ENCODE measurements at regions of chr1 and their contacts with region 1.

Region 1: GRCh38 chr1:178310685-178311105 is 186.1 kb downstream of the CLEC20A start:
- DNase-seq: no peak
- ATAC-seq: peak; percentile 78 to 86 (median 82)
- H3K4me3 ChIP-seq: no peak overlapping the region
- H3K27ac ChIP-seq: peak overlapping the region in 1 of 12 donors; percentile 45
- H3K4me1 ChIP-seq: peaks cover 0 to 25% (median 8%) of the 10 kb centered on the region in 12 donors
- H3K27me3 ChIP-seq: no peaks in the 10 kb centered on the region
- CTCF ChIP-seq: peak; percentile 61 to 84 (median 78)
- POLR2A ChIP-seq: no peak

Region 2: DNA sequence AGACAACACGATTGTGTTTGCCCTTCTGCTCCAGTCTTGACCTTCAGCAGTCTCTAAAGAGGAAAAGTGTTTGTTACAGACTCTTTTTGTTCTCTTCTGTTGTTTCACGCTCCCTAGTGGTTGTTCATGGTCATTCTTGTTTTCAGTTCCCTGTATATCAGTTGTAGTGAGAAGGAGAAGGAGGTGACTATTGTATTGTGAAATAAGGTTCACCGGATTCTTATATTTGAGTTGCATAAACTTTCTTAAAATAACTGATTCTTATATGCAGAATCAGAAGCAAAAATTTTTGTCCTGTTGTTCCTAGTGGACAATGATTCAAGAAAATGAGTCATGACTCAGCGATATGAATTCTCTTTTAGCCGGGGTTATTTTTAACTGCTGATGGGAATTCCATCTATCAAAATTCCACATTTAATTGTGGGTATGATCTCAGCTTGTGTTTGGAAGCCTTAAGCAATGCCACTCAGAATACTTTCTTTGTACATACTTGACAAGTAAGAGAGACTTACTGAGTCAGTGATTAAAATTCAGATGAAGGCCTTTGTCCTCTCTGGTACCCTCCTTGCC is 33.9 kb after region 1 on chr1:
- intact Hi-C with region 1: loop called in 4 of 10 experiments (anchors 2 to 5 kb)
- DNase-seq: no peak
- ATAC-seq: peak; percentile 63 to 83 (median 82)
- H3K4me3 ChIP-seq: peak overlapping the region in 6 of 12 donors; percentile 3 to 12 (median 5)
- H3K27ac ChIP-seq: peak overlapping the region; percentile 69 to 93 (median 83)
- H3K4me1 ChIP-seq: peaks cover 0 to 60% (median 28%) of the 10 kb centered on the region in 12 donors
- H3K27me3 ChIP-seq: no peaks in the 10 kb centered on the region
- CTCF ChIP-seq: peak; percentile 28 to 71 (median 50)
- POLR2A ChIP-seq: no peak

Region 3: DNA sequence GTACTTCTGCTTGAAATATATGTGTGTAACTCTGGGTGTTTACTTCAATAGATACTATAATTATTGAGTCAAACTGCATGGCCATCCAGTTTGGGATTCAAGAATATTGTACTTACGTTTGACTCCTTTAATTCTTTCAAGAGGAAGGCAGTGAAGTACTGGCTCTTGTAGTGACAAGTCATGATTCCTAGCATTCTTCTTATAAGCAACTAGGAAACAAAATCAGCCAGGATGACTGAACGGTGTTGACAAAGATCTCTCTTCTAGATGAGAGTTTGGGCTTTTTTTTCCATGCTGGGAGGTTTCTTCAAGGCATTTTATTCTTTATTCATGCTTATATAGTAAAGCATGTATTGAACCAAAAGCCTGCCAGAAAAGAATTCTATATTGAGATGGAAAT is 127.7 kb after region 1 on chr1:
- intact Hi-C with region 1: no loop called
- DNase-seq: no peak
- ATAC-seq: no peak
- H3K4me3 ChIP-seq: no peak overlapping the region
- H3K27ac ChIP-seq: no peak overlapping the region
- H3K4me1 ChIP-seq: peaks cover 0 to 9% (median 2%) of the 10 kb centered on the region in 12 donors
- H3K27me3 ChIP-seq: no peaks in the 10 kb centered on the region
- CTCF ChIP-seq: no peak
- POLR2A ChIP-seq: no peak

Region 4: GRCh38 chr1:178501705-178502329 is 191.1 kb after region 1 on chr1:
- intact Hi-C with region 1: loop called (anchors 2 to 10 kb)
- DNase-seq: peak; percentile 66 to 84 (median 72)
- ATAC-seq: peak in 3 of 4 donors; percentile 77 to 84 (median 82)
- H3K4me3 ChIP-seq: no peak overlapping the region
- H3K27ac ChIP-seq: no peak overlapping the region
- H3K4me1 ChIP-seq: peaks cover 0 to 7% (median 0%) of the 10 kb centered on the region in 12 donors
- H3K27me3 ChIP-seq: no peaks in the 10 kb centered on the region
- CTCF ChIP-seq: peak; percentile 84 to 96 (median 90)
- POLR2A ChIP-seq: no peak

Region 5: DNA sequence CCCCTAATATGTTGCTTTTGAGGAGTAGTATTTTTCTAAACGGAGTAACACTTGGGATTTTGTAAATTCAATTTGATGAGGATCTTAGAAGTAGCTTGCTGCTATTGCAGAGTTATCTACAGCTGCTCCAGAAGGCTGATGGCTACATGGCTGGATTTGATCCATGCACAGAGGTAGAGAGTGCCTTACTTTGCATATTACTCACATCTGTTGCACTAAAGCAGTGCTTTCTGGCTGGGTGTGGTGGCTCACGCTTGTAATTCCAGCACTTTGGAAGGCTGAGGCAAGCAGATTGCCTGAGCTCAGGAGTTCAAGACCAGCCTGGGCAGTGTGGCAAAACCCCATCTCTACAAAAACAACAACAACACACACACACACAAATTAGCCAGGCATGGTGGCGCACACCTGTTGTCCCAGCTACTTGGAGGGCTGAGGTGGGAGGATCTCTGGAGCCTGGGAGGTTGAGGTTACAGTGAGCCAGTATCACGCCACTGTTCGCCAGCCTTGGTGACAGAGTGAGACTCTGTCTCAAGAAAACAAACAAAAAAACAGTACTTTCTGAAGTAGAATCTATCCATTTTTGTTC is 439.0 kb after region 1 on chr1:
- intact Hi-C with region 1: loop called in 1 of 10 experiments (anchors 5 kb)
- DNase-seq: no peak
- ATAC-seq: no peak
- H3K4me3 ChIP-seq: no peak overlapping the region
- H3K27ac ChIP-seq: no peak overlapping the region
- H3K4me1 ChIP-seq: peaks cover 0 to 5% (median 0%) of the 10 kb centered on the region in 12 donors
- H3K27me3 ChIP-seq: no peaks in the 10 kb centered on the region
- CTCF ChIP-seq: no peak
- POLR2A ChIP-seq: no peak

Region 6: GRCh38 chr1:179012038-179012437 is 701.3 kb after region 1 on chr1:
- intact Hi-C with region 1: loop called in 2 of 10 experiments (anchors 5 to 10 kb)
- DNase-seq: no peak
- ATAC-seq: no peak
- H3K4me3 ChIP-seq: no peak overlapping the region
- H3K27ac ChIP-seq: no peak overlapping the region
- H3K4me1 ChIP-seq: peaks cover 0 to 15% (median 4%) of the 10 kb centered on the region in 12 donors
- H3K27me3 ChIP-seq: no peaks in the 10 kb centered on the region
- CTCF ChIP-seq: no peak
- POLR2A ChIP-seq: no peak

Measured in heart left ventricle (tissue), 16 donors.